Left cardiac atrium (tissue), 4 donors: ENCODE measurements at regions of chr9 and their contacts with region 1.

Region 1: GRCh38 chr9:71806901-71807307 is 38.6 kb upstream of the CEMIP2 start:
- DNase-seq: peak; percentile 48
- ATAC-seq: peak; percentile 90 to 96

Region 2: DNA sequence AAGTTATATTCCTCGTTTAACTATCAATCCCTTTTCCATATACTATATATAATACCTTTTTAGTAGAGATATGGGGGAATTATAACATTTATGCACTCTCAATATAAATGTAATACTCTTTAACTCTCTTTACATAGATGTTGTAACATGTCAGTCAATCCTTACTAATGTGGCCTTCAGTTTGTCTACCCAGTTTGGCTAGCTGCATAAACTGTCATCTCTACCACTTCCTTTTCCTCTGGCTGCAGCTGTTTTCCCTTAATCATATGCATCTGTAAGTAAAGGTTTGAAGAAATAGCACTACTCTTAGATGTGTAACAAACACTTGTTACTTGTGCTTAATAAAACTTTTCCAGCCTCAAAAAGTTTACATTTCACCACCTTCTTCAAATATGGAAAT is 90.7 kb after region 1 on chr9:
- intact Hi-C with region 1: no loop called
- DNase-seq: no peak
- ATAC-seq: no peak

Region 3: GRCh38 chr9:72271613-72272478 is 464.9 kb after region 1 on chr9:
- intact Hi-C with region 1: loop called in 1 of 2 experiments (anchors 10 kb)
- DNase-seq: no peak
- ATAC-seq: peak in 1 of 2 donors; percentile 27